ENCODE measurements at regions of chr22 and their contacts with region 1.

Region 1: GRCh38 chr22:36239401-36240171 is at the start of gene APOL2:
- DNase-seq: peak; percentile 84
- H3K4me3 Mint-ChIP-seq: peak within 1 kb of the TSS; percentile 99
- H3K27ac Mint-ChIP-seq: peak within 1 kb of the TSS; percentile 97
- H3K4me1 Mint-ChIP-seq: peaks cover 54% of the 10 kb centered on the region
- H3K27me3 Mint-ChIP-seq: no peaks in the 10 kb centered on the region
- total RNA-seq, gene APOL2: 54.4 and 62.2 TPM in 2 replicates

Region 2: GRCh38 chr22:35648066-35649025 is 591.2 kb before region 1 on chr22 and contains the start of gene APOL6:
- intact Hi-C with region 1: loop called (anchors 2 kb)
- DNase-seq: peak; percentile 71
- H3K4me3 Mint-ChIP-seq: peak within 1 kb of the TSS; percentile 100
- H3K27ac Mint-ChIP-seq: peak within 1 kb of the TSS; percentile 100
- H3K4me1 Mint-ChIP-seq: peaks cover 45% of the 10 kb centered on the region
- H3K27me3 Mint-ChIP-seq: no peaks in the 10 kb centered on the region
- total RNA-seq, gene APOL6: 27.3 and 27.7 TPM in 2 replicates

Region 3: GRCh38 chr22:36156515-36157419 is 82.8 kb before region 1 on chr22:
- intact Hi-C with region 1: loop called (anchors 1 kb)
- DNase-seq: peak; percentile 37
- H3K4me3 Mint-ChIP-seq: peak overlapping the region; percentile 95
- H3K27ac Mint-ChIP-seq: peak overlapping the region; percentile 95
- H3K4me1 Mint-ChIP-seq: peaks cover 90% of the 10 kb centered on the region
- H3K27me3 Mint-ChIP-seq: no peaks in the 10 kb centered on the region

Region 4: DNA sequence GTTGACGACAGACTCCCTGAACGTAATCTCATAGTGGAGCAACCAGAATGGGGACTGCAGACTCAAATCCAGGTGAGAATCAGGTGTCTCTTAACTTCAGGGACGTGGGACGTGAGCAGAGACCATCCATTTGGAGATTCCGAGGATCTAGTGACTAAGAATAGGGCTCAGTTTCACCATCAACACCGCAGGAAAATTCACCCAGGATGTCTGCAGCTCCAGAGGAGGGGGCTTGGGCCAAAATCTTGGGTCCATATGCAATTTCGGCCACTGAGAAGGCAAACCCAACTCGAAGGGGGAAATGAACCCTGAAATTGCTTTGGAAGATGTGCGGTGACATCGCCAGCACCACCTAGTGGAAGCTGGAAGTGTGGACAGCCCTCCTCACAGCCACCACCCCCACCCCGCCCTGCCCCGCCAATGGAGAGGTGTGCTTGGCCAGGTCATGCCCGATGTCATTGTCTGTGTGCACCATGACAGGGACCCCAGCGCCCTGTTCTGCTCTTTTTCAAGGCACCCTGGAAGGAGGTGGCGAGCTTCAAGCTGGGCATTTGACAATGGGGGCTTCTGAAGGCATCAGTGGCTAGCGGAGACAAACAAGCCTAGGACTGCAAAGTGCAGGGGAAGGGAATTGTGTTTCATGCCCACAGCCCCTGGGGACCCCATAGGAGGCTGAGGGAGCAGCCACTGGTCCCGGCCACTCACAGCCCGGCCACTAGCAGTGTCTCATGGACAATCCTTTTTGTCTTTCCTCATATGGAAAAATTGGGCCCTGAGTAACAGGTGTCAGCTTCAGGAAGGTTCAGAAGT is 38.1 kb after region 1 on chr22:
- intact Hi-C with region 1: loop called (anchors 1 kb)
- DNase-seq: peak; percentile 47
- H3K4me3 Mint-ChIP-seq: no peak overlapping the region
- H3K27ac Mint-ChIP-seq: peak overlapping the region; percentile 24
- H3K4me1 Mint-ChIP-seq: peaks cover 12% of the 10 kb centered on the region
- H3K27me3 Mint-ChIP-seq: no peaks in the 10 kb centered on the region

Region 5: GRCh38 chr22:36506637-36507517 is 267.3 kb after region 1 on chr22 and contains the start of gene FOXRED2:
- intact Hi-C with region 1: loop called (anchors 1 kb)
- DNase-seq: peak; percentile 92
- H3K4me3 Mint-ChIP-seq: peak within 1 kb of the TSS; percentile 74
- H3K27ac Mint-ChIP-seq: no peak within 1 kb of the TSS
- H3K4me1 Mint-ChIP-seq: peaks cover 19% of the 10 kb centered on the region
- H3K27me3 Mint-ChIP-seq: no peaks in the 10 kb centered on the region
- total RNA-seq, gene FOXRED2: 22.3 and 25.0 TPM in 2 replicates

Measured in activated T-helper 1 cell treated with anti-CD3 and anti-CD28 coated beads, Interleukin-12 subunit alpha, Interleukin-12 subunit beta, Interleukin-2, Interleukin-4 antibody, amounts not matched to agents 30 ng/mL and 10 ng/mL and 1 ng/mL, durations not matched to agents 14 hours and 24 hours and 36 hours (primary cell).